KBM-7 (cell line): ENCODE measurements at regions of chr1 and their contacts with region 1.

Region 1: DNA sequence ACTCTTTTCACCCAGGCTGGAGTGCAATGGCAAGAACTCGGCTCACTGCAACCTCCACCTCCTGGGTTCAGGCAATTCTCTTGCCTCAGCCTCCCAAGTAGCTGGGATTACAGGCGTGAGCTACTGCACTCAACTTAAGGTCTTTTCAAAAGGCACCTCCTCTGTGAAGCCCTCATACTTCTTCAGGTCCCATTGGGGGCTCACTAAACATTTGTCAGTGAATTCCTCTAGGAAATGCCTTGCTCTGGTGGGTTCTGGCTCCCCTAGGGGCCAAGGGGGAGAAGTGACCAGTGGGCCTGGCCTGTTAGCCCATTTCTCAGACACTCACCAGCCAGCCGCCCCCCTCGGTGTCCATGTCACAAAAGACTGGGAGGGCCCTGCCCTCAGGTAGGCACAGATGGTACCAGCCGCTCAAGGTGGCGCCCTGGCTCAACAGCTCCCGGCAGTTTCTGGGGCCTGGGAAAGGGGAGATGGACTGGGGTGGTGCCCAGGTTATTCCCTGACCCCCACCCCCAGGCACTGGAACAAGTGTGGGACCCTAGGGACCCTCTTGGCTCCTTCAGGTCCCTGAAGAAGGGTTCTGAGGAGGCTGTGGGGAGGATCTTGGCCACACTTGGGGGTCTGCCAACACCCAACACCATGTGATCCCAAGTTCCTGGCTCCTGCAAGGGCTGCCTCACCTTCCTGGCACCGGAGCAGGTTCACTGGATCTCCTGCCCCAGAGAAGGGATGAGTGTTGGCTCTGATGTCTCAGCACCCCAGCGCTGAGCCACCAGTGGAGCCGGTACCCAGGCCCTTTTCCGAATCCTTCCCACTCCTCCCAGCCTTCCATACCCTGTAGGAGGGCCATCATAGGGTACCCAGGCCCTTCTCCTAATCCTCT is 1.6 kb downstream of the FCN3 start:
- DNase-seq: no peak

Region 2: GRCh38 chr1:27318596-27318995 is 54.5 kb before region 1 on chr1:
- in situ Hi-C with region 1: loop called (anchors 10 kb)
- DNase-seq: no peak